ENCODE measurements at regions of chr12 and their contacts with region 1.

Region 1: DNA sequence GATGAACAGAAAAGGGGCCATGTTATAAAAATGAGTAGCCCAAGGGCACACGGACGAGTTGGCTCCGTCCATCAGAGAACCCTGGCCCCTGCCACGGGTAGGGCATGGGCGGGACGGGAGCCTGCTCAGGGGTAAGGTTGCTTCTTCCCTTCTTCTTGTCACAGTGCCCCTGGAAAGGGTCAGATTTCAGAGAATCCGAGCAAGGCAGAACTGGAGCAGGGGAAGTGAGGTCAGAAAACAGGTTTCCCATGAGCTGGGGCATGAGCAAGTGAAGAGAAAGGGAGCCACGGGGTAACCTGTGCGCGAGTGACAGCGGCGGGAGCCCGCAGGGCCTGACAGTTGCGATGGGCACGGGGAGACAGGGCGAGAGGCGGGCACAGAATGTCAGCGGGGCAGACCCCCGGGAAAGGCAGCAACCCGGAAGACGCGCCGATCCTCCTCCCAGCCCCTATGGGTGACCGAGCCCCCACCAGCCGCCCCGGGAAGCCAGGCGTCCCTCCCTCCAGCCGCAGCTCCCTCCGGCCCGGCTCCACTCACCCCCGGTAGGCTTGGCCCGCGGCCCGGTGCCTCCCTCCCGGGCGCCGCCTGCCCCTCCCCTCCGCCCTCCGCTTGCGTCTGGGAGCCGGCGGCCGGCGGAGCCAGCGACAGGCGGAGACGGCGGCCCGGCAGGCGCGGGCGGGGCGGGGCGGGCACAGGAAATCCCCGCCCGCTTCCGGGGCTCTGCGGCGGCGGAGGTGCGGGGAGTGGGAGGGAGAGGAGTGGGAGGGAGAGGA is at the start of gene ZNF641:
- DNase-seq: peak; percentile 90 to 94 (median 91)
- ATAC-seq: peak; percentile 78 to 98 (median 94)
- H3K4me3 ChIP-seq: peak within 1 kb of the TSS; percentile 70 to 94 (median 84)
- H3K27ac ChIP-seq: peak within 1 kb of the TSS; percentile 92 to 99 (median 97)
- H3K4me1 ChIP-seq: peaks cover 0 to 33% (median 25%) of the 10 kb centered on the region in 12 donors
- H3K27me3 ChIP-seq: no peaks in the 10 kb centered on the region
- CTCF ChIP-seq: peak in 2 of 12 donors; percentile 2 to 3
- POLR2A ChIP-seq: peak in 1 of 2 donors; percentile 79
- total RNA-seq, gene ZNF641: 12.6 to 21.1 (median 15.5) TPM

Region 2: GRCh38 chr12:48197971-48198671 is 152.3 kb before region 1 on chr12:
- intact Hi-C with region 1: loop called in 7 of 10 experiments (anchors 2 to 10 kb)
- DNase-seq: peak; percentile 98 to 99 (median 99)
- ATAC-seq: peak; percentile 98 to 100 (median 99)
- H3K4me3 ChIP-seq: peak overlapping the region; percentile 60 to 92 (median 78)
- H3K27ac ChIP-seq: peak overlapping the region; percentile 89 to 100 (median 98)
- H3K4me1 ChIP-seq: peaks cover 0 to 38% (median 16%) of the 10 kb centered on the region in 12 donors
- H3K27me3 ChIP-seq: no peaks in the 10 kb centered on the region
- CTCF ChIP-seq: no peak
- POLR2A ChIP-seq: peak; percentile 61 to 99

Region 3: DNA sequence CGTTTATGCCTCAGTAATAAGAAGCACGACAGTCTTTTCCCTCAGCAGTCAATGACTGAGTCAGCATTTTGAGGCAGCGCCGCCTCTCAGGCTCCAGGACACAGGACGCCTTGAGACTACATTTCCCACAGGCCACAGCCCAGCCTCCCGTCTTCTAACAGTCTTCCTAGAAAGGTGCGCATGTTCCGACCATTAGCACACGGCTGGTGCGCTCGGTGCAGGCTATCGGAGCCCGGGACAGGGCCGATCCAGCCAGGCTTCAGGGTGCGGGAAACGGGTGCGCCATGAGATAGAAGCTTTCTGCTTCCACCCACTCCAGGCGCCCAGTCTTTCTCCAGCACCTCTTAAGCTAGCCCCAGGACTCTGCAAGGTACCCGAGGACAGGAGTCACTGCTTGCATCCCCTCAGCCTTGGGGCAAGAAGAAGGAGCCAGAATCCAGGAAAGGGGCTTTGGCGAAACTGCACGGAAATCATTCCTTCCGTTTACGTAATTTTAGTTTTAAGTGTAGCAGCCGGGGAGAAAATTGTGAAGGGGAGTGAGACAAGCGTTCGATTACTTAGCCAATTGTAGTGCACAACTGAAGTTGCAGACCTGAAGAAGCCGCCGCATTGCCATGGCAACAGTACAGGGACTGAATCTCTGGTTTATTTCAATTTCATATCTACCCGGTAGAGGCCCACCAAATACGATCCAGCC is 53.7 kb before region 1 on chr12:
- intact Hi-C with region 1: loop called in 1 of 10 experiments (anchors 5 kb)
- DNase-seq: peak; percentile 71 to 86 (median 83)
- ATAC-seq: peak; percentile 97 to 100 (median 100)
- H3K4me3 ChIP-seq: peak overlapping the region in 11 of 12 donors; percentile 23 to 68 (median 58)
- H3K27ac ChIP-seq: peak overlapping the region in 5 of 12 donors; percentile 1 to 59 (median 42)
- H3K4me1 ChIP-seq: peaks cover 0 to 8% (median 0%) of the 10 kb centered on the region in 12 donors
- H3K27me3 ChIP-seq: no peaks in the 10 kb centered on the region
- CTCF ChIP-seq: no peak
- POLR2A ChIP-seq: peak in 1 of 2 donors; percentile 48

Region 4: DNA sequence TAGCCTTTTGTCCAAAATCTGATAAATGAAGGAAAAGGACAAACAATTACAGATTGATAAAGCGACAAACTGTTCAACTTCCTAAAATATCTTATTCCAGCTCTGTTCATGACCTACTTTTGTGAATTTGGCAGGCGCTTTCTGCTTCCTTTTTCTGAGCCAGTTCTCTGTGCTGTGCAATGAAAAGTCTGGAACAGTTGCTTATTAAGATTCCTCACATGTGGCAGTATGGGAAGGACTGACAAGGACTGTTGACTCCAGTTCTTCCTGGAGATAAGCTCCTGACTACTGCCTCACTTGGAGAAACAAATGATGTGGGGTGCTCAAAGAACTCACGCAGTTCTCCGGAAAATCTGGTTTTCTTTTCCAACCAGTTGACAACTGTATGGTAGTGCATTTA is 63.6 kb after region 1 on chr12:
- intact Hi-C with region 1: loop called in 1 of 10 experiments (anchors 1 kb)
- DNase-seq: peak in 2 of 5 donors; percentile 24 to 31
- ATAC-seq: peak; percentile 89 to 94 (median 91)
- H3K4me3 ChIP-seq: peak overlapping the region in 1 of 12 donors; percentile 3
- H3K27ac ChIP-seq: peak overlapping the region in 11 of 12 donors; percentile 2 to 70 (median 46)
- H3K4me1 ChIP-seq: peaks cover 0 to 19% (median 11%) of the 10 kb centered on the region in 12 donors
- H3K27me3 ChIP-seq: no peaks in the 10 kb centered on the region
- CTCF ChIP-seq: no peak
- POLR2A ChIP-seq: no peak

Region 5: GRCh38 chr12:48442191-48442828 is 91.9 kb after region 1 on chr12:
- intact Hi-C with region 1: loop called in 1 of 10 experiments (anchors 10 kb)
- DNase-seq: no peak
- ATAC-seq: no peak
- H3K4me3 ChIP-seq: no peak overlapping the region
- H3K27ac ChIP-seq: no peak overlapping the region
- H3K4me1 ChIP-seq: peaks cover 0 to 15% (median 8%) of the 10 kb centered on the region in 12 donors
- H3K27me3 ChIP-seq: no peaks in the 10 kb centered on the region
- CTCF ChIP-seq: no peak
- POLR2A ChIP-seq: no peak